ENCODE measurements at regions of chr16 and their contacts with region 1.

Region 1: GRCh38 chr16:58121132-58121531 is 8.0 kb downstream of the CFAP20 start:
- DNase-seq: peak; percentile 40
- H3K4me3 Mint-ChIP-seq: peak overlapping the region; percentile 60
- H3K27ac Mint-ChIP-seq: peak overlapping the region; percentile 90
- H3K4me1 Mint-ChIP-seq: peaks cover 20% of the 10 kb centered on the region
- H3K27me3 Mint-ChIP-seq: no peaks in the 10 kb centered on the region
- CTCF ChIP-seq: no peak

Region 2: DNA sequence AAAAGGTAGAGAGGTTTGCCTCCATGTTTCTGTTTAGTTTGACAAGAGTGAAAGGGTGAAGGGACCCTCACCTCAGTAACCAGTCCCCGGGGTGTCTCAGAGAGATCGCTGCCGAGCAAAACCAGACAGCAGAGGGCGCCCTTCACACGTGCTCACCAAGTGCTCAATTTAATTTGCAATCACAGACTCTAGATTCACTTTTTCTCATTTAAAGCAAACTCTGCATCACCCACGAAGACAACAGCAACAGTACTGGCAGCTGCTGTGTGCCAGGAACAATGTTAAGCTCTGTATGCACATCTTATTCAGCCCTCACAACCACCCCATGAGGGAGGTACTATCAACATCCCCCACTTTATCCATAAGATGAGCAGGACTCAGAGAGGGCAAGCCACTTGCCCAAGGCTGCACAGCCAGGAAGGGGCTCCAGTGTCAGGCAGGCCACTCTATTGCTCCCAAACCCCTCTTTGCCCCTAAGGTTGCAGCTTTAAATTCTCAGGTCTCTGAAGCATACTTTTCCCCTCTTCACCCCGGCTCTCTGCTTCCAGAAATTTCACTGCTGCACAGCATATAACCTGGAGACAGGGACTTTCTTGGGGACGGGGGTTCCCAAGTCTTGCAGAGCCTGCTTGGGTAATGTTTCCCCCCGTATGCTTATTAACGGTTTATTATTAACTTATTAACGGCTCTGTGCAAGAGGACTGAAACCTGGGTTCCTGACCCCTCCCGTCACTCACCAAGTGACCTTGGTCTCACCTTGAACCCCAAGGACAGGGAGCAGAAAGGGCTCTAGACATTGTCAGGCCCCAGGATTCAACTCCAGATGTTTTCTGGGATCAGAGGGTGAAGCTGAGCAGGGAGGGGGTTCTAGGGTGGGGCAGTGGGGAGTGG is 221.1 kb before region 1 on chr16:
- CTCF ChIA-PET with region 1: interaction called, 19 read pairs
- POLR2A ChIA-PET with region 1: no interaction called
- intact Hi-C with region 1: loop called (anchors 5 kb)
- DNase-seq: peak; percentile 73
- H3K4me3 Mint-ChIP-seq: no peak overlapping the region
- H3K27ac Mint-ChIP-seq: no peak overlapping the region
- H3K4me1 Mint-ChIP-seq: peaks cover 6% of the 10 kb centered on the region
- H3K27me3 Mint-ChIP-seq: no peaks in the 10 kb centered on the region
- CTCF ChIP-seq: peak; percentile 94

Region 3: GRCh38 chr16:58009856-58010416 is 111.2 kb before region 1 on chr16:
- CTCF ChIA-PET with region 1: interaction called, 10 read pairs
- POLR2A ChIA-PET with region 1: no interaction called
- intact Hi-C with region 1: no loop called
- DNase-seq: no peak
- H3K4me3 Mint-ChIP-seq: no peak overlapping the region
- H3K27ac Mint-ChIP-seq: no peak overlapping the region
- H3K4me1 Mint-ChIP-seq: peaks cover 8% of the 10 kb centered on the region
- H3K27me3 Mint-ChIP-seq: no peaks in the 10 kb centered on the region
- CTCF ChIP-seq: no peak

Region 4: GRCh38 chr16:58018804-58019203 is 102.3 kb before region 1 on chr16:
- CTCF ChIA-PET with region 1: interaction called, 52 read pairs
- POLR2A ChIA-PET with region 1: interaction called, 68 read pairs
- intact Hi-C with region 1: loop called (anchors 1 kb)
- DNase-seq: no peak
- H3K4me3 Mint-ChIP-seq: no peak overlapping the region
- H3K27ac Mint-ChIP-seq: no peak overlapping the region
- H3K4me1 Mint-ChIP-seq: peaks cover 15% of the 10 kb centered on the region
- H3K27me3 Mint-ChIP-seq: no peaks in the 10 kb centered on the region
- CTCF ChIP-seq: no peak

Region 5: GRCh38 chr16:58025351-58026138 is 95.6 kb before region 1 on chr16 and contains the start of gene MMP15:
- CTCF ChIA-PET with region 1: interaction called, 52 read pairs
- POLR2A ChIA-PET with region 1: interaction called, 68 read pairs
- intact Hi-C with region 1: loop called (anchors 1 kb)
- DNase-seq: peak; percentile 71
- H3K4me3 Mint-ChIP-seq: peak within 1 kb of the TSS; percentile 56
- H3K27ac Mint-ChIP-seq: no peak within 1 kb of the TSS
- H3K4me1 Mint-ChIP-seq: peaks cover 13% of the 10 kb centered on the region
- H3K27me3 Mint-ChIP-seq: no peaks in the 10 kb centered on the region
- CTCF ChIP-seq: no peak
- total RNA-seq, gene MMP15: 1.3 and 1.7 TPM in 2 replicates

Measured in MCF 10A (cell line).